PC-9 (cell line): ENCODE measurements at regions of chr17 and their contacts with region 1.

Region 1: DNA sequence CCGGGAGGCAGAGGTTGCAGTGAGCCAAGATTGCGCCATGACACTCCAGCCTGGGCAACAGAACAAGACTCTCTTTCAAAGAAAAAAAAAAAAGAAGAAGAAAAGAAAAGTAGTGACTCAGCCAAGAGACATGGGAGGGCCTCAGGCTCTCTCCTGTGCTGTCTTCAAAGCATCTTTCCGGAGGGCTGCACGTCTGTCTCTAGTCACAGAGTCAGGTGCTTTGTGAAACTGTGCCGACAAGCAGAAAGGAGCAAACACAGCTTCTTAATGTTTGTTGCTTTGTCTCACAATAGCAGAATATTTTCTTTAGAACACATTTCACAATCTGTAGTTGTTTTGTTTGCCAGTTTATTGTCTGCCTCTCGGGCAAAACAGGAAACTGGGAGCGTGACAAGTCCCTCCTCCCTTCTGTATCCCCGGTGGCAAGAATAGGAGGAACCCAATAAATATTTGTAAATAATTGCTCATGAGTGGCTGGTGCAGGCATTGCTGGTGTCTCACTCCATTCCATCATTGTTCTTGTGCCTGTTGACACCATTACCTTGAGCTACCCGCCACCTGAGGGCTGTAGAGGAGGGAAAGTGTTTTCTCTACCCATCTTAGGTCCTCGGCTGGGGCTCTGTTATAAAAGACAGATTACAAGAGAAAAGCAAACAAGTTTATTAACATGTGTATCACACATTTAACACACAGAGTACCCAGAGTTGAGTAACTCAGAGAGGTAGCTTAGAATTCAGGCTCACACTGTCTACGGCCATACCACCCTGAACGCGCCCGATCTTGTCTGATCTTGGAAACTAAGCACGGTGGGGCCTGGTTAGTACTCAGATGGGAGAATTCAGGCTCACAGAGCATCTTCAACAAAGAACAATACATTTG is 5.5 kb downstream of the GAST start:
- DNase-seq: peak; percentile 48 to 86
- H3K4me3 ChIP-seq: peak overlapping the region; percentile 28; the same call in 1 of the 2 replicates
- H3K27ac ChIP-seq: peak overlapping the region; percentile 48
- H3K4me1 ChIP-seq: peaks cover 19% of the 10 kb centered on the region
- H3K27me3 ChIP-seq: no peaks in the 10 kb centered on the region
- CTCF ChIP-seq: no peak

Region 2: GRCh38 chr17:41500131-41500911 is 217.3 kb before region 1 on chr17:
- CTCF ChIA-PET with region 1: no interaction called
- POLR2A ChIA-PET with region 1: no interaction called
- intact Hi-C with region 1: no loop called
- DNase-seq: peak; percentile 74 to 92
- H3K4me3 ChIP-seq: peak overlapping the region; percentile 36; the same call in 1 of the 2 replicates
- H3K27ac ChIP-seq: peak overlapping the region; percentile 75
- H3K4me1 ChIP-seq: peaks cover 81% of the 10 kb centered on the region
- H3K27me3 ChIP-seq: no peaks in the 10 kb centered on the region
- CTCF ChIP-seq: no peak

Region 3: DNA sequence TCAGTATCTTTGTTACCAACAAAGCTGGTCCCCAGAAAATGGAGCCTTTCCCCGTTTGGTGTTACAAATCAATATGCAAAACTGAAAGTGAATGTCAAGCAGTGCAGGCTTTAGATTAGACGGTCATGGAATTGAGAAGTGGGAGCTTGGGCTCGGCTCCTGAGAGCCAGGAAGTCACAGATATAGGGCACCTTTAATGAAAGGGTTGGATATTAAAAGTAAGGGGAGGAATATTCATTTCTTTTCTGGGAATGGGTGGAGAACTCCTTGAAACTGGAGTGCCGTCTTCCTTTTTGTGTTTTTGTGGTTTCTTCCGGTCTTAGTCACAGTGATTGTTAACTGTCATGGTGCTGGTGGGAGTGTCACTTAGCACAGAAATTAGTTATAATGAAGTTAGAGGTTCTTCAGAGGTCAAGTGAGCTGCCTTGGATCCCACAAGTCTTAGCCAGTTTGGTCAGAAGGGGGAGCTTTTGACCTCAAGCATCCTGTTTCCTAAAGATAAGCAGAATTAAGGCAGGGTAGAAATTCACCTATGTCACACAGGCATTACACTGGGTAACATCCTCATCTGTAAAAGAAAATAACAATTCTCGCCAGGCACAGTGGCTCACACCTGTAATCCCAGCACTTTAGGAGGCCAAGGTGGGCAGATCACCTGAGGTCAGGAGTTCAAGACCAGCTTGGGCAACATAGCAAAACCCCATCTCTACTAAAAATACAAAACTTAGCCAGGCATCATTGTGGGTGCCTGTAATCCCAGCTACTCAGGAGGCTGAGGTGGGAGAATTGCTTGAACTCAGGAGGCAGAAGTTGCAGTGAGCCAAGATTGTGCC is 38.5 kb before region 1 on chr17:
- CTCF ChIA-PET with region 1: no interaction called
- POLR2A ChIA-PET with region 1: interaction called, 16 read pairs
- intact Hi-C with region 1: no loop called
- DNase-seq: peak; percentile 67 to 88
- H3K4me3 ChIP-seq: peak overlapping the region; percentile 50
- H3K27ac ChIP-seq: peak overlapping the region; percentile 94
- H3K4me1 ChIP-seq: peaks cover 24% of the 10 kb centered on the region
- H3K27me3 ChIP-seq: no peaks in the 10 kb centered on the region
- CTCF ChIP-seq: peak; percentile 28; the same call in 1 of the 2 replicates